ENCODE measurements at regions of chr3 and their contacts with region 1.

Region 1: DNA sequence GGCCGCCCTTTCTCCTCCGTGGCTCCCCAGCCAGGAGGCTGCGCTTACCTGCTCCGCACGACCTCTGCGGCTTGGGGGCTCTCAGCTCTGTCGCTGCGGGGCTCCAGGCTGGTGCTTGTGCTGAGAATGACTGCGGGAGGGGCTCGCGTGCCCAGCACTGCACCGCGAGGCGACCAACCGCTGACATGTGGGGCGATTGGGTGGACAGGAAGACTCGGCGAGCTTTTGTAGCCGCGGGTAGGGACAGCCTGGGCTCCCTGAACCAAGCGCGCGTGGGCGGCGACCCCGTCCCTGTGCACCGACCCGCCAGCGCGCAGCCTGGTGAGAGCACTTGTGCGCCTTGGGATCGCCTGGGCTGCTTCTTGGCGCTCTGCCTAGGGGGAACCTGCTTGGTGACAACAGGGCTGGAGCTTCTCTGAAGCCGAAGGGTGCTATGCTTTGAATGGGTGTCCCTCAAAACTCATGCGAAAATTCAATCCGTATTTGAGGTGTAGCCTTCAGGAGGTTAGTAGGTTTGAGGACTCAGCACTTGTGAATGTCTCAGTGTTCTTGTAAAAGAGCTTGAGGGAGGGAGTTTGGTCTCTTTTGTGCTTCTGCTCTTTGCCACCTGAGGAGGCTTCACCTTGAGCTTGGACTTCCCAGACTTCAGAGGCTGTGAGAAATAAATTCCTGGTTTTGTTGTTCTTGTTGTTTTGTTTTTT is 50.4 kb downstream of the IL12A start:
- DNase-seq: peak; percentile 42
- ATAC-seq: no peak
- H3K4me3 Mint-ChIP-seq: no peak overlapping the region
- H3K27ac Mint-ChIP-seq: no peak overlapping the region
- H3K4me1 Mint-ChIP-seq: no peaks in the 10 kb centered on the region
- H3K27me3 Mint-ChIP-seq: peaks cover 30% of the 10 kb centered on the region

Region 2: GRCh38 chr3:160225176-160226025 is 186.4 kb after region 1 on chr3 and contains the start of gene C3orf80:
- CTCF ChIA-PET with region 1: interaction called, 4 read pairs
- POLR2A ChIA-PET with region 1: no interaction called
- intact Hi-C with region 1: loop called in 1 of 2 experiments (anchors 10 kb)
- DNase-seq: peak; percentile 76
- ATAC-seq: peak; percentile 91
- H3K4me3 Mint-ChIP-seq: peak within 1 kb of the TSS; percentile 62
- H3K27ac Mint-ChIP-seq: no peak within 1 kb of the TSS
- H3K4me1 Mint-ChIP-seq: peaks cover 10% of the 10 kb centered on the region
- H3K27me3 Mint-ChIP-seq: peaks cover 41% of the 10 kb centered on the region
- total RNA-seq, gene C3orf80: 0.09 TPM in 1 of 2 experiments, not detected in the other

Measured in activated CD4-positive, alpha-beta T cell treated with anti-CD3 and anti-CD28 coated beads for 36 hours (primary cell).